Naive thymus-derived CD4-positive, alpha-beta T cell (primary cell): ENCODE measurements at regions of chr4 and their contacts with region 1.

Region 1: GRCh38 chr4:118076958-118077766 is 42.9 kb downstream of the NDST3 start:
- DNase-seq: peak in 2 of 9 donors; percentile 2 to 19
- ATAC-seq: peak; percentile 26
- H3K4me3 ChIP-seq: no peak overlapping the region
- H3K4me3 Mint-ChIP-seq: no peak overlapping the region
- H3K27ac ChIP-seq: no peak overlapping the region
- H3K27ac Mint-ChIP-seq: no peak overlapping the region
- H3K4me1 ChIP-seq: no peaks in the 10 kb centered on the region
- H3K4me1 Mint-ChIP-seq: peaks cover 0 to 5% (median 0%) of the 10 kb centered on the region in 7 donors
- H3K27me3 ChIP-seq: no peaks in the 10 kb centered on the region
- H3K27me3 Mint-ChIP-seq: peaks cover 0 to 7% (median 0%) of the 10 kb centered on the region in 5 donors

Region 2: GRCh38 chr4:118099106-118099505 is 21.9 kb after region 1 on chr4:
- CTCF ChIA-PET with region 1: no interaction called
- POLR2A ChIA-PET with region 1: no interaction called
- intact Hi-C with region 1: no loop called
- DNase-seq: no peak
- ATAC-seq: no peak
- H3K4me3 ChIP-seq: no peak overlapping the region
- H3K4me3 Mint-ChIP-seq: no peak overlapping the region
- H3K27ac ChIP-seq: no peak overlapping the region
- H3K27ac Mint-ChIP-seq: no peak overlapping the region
- H3K4me1 ChIP-seq: no peaks in the 10 kb centered on the region
- H3K4me1 Mint-ChIP-seq: no peaks in the 10 kb centered on the region
- H3K27me3 ChIP-seq: no peaks in the 10 kb centered on the region
- H3K27me3 Mint-ChIP-seq: peaks cover 0 to 2% (median 0%) of the 10 kb centered on the region in 5 donors

Region 3: GRCh38 chr4:118124997-118125396 is 47.8 kb after region 1 on chr4:
- CTCF ChIA-PET with region 1: no interaction called
- POLR2A ChIA-PET with region 1: no interaction called
- intact Hi-C with region 1: no loop called
- DNase-seq: no peak
- ATAC-seq: no peak
- H3K4me3 ChIP-seq: no peak overlapping the region
- H3K4me3 Mint-ChIP-seq: no peak overlapping the region
- H3K27ac ChIP-seq: no peak overlapping the region
- H3K27ac Mint-ChIP-seq: no peak overlapping the region
- H3K4me1 ChIP-seq: no peaks in the 10 kb centered on the region
- H3K4me1 Mint-ChIP-seq: no peaks in the 10 kb centered on the region
- H3K27me3 ChIP-seq: no peaks in the 10 kb centered on the region
- H3K27me3 Mint-ChIP-seq: peaks cover 0 to 9% (median 0%) of the 10 kb centered on the region in 5 donors

Region 4: DNA sequence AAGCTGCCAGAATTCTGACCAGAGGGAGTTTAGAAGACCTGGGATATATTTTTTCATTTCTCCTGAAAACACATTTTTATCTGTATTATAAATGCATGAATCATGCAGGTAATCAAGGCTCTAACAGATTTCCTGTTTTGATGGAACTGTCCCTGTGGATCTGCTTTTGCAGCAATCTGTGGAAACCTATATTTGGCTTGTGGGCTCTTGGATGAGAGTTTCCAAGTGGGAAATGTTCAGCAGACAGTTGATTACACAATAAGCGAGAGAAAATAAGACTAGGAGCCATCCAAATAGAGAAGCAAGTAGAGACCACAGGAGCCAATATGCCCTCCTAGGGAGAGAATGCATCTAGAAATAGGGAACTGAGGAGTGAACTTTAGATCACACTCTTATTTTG is 62.1 kb after region 1 on chr4:
- CTCF ChIA-PET with region 1: no interaction called
- POLR2A ChIA-PET with region 1: no interaction called
- intact Hi-C with region 1: no loop called
- DNase-seq: no peak
- ATAC-seq: no peak
- H3K4me3 ChIP-seq: no peak overlapping the region
- H3K4me3 Mint-ChIP-seq: no peak overlapping the region
- H3K27ac ChIP-seq: no peak overlapping the region
- H3K27ac Mint-ChIP-seq: no peak overlapping the region
- H3K4me1 ChIP-seq: no peaks in the 10 kb centered on the region
- H3K4me1 Mint-ChIP-seq: no peaks in the 10 kb centered on the region
- H3K27me3 ChIP-seq: no peaks in the 10 kb centered on the region
- H3K27me3 Mint-ChIP-seq: peaks cover 0 to 3% (median 0%) of the 10 kb centered on the region in 5 donors

Region 5: GRCh38 chr4:118158763-118159375 is 81.7 kb after region 1 on chr4:
- CTCF ChIA-PET with region 1: no interaction called
- POLR2A ChIA-PET with region 1: no interaction called
- intact Hi-C with region 1: no loop called
- DNase-seq: no peak
- ATAC-seq: no peak
- H3K4me3 ChIP-seq: no peak overlapping the region
- H3K4me3 Mint-ChIP-seq: no peak overlapping the region
- H3K27ac ChIP-seq: no peak overlapping the region
- H3K27ac Mint-ChIP-seq: no peak overlapping the region
- H3K4me1 ChIP-seq: no peaks in the 10 kb centered on the region
- H3K4me1 Mint-ChIP-seq: peaks cover 0 to 13% (median 0%) of the 10 kb centered on the region in 7 donors
- H3K27me3 ChIP-seq: no peaks in the 10 kb centered on the region
- H3K27me3 Mint-ChIP-seq: no peaks in the 10 kb centered on the region

Region 6: GRCh38 chr4:118270492-118270891 is 193.3 kb after region 1 on chr4:
- CTCF ChIA-PET with region 1: no interaction called
- POLR2A ChIA-PET with region 1: no interaction called
- intact Hi-C with region 1: loop called in 1 of 2 experiments (anchors 1 kb)
- DNase-seq: peak in 6 of 9 donors; percentile 9 to 50 (median 34)
- ATAC-seq: peak; percentile 68
- H3K4me3 ChIP-seq: no peak overlapping the region
- H3K4me3 Mint-ChIP-seq: no peak overlapping the region
- H3K27ac ChIP-seq: no peak overlapping the region
- H3K27ac Mint-ChIP-seq: no peak overlapping the region
- H3K4me1 ChIP-seq: no peaks in the 10 kb centered on the region
- H3K4me1 Mint-ChIP-seq: peaks cover 0 to 5% (median 0%) of the 10 kb centered on the region in 7 donors
- H3K27me3 ChIP-seq: no peaks in the 10 kb centered on the region
- H3K27me3 Mint-ChIP-seq: peaks cover 0 to 4% (median 0%) of the 10 kb centered on the region in 5 donors